ENCODE measurements at regions of chr18 and their contacts with region 1.

Region 1: DNA sequence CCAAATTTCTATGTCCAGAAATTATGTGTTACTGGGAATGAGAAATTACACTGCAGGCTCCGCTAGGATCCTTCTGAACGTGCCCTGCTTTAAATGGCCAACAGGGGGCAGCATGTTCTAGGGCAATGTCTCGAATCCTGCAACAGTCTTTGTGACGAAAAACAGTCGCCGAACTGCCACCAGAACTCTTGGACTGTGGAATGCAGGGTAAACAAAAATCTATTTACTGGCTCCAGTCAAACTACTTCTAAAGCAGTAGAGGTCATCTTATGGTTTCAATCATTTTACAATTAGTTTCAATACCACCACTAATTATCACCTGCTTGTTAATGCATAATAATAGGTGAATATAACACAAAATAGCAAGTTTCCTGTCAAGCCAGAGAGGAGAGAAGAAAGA is 9.8 kb upstream of the ZNF397 start:
- DNase-seq: peak; percentile 73 to 79
- H3K4me3 ChIP-seq: no peak overlapping the region
- H3K27ac ChIP-seq: no peak overlapping the region
- H3K4me1 ChIP-seq: no peaks in the 10 kb centered on the region
- H3K27me3 ChIP-seq: no peaks in the 10 kb centered on the region
- CTCF ChIP-seq: peak; percentile 53 to 80 (median 71)
- POLR2A ChIP-seq: no peak

Region 2: GRCh38 chr18:34242740-34243139 is 988.3 kb before region 1 on chr18:
- intact Hi-C with region 1: no loop called
- DNase-seq: no peak
- H3K4me3 ChIP-seq: no peak overlapping the region
- H3K27ac ChIP-seq: no peak overlapping the region
- H3K4me1 ChIP-seq: no peaks in the 10 kb centered on the region
- H3K27me3 ChIP-seq: no peaks in the 10 kb centered on the region
- CTCF ChIP-seq: no peak
- POLR2A ChIP-seq: no peak

Region 3: GRCh38 chr18:34801774-34802173 is 429.3 kb before region 1 on chr18:
- intact Hi-C with region 1: no loop called
- DNase-seq: no peak
- H3K4me3 ChIP-seq: no peak overlapping the region
- H3K27ac ChIP-seq: no peak overlapping the region
- H3K4me1 ChIP-seq: no peaks in the 10 kb centered on the region
- H3K27me3 ChIP-seq: no peaks in the 10 kb centered on the region
- CTCF ChIP-seq: no peak
- POLR2A ChIP-seq: no peak

Region 4: GRCh38 chr18:35343936-35344735 is 113.1 kb after region 1 on chr18 and contains the start of gene ZNF24:
- intact Hi-C with region 1: loop called (anchors 10 kb)
- DNase-seq: peak; percentile 95 to 98
- H3K4me3 ChIP-seq: peak within 1 kb of the TSS; percentile 87 to 94 (median 92)
- H3K27ac ChIP-seq: peak within 1 kb of the TSS; percentile 100
- H3K4me1 ChIP-seq: peaks cover 0 to 4% of the 10 kb centered on the region in 2 donors
- H3K27me3 ChIP-seq: no peaks in the 10 kb centered on the region
- CTCF ChIP-seq: peak in 2 of 3 donors; percentile 7 to 12
- POLR2A ChIP-seq: peak; percentile 83
- total RNA-seq, gene ZNF24: 39.0 to 79.0 (median 52.8) TPM

Region 5: GRCh38 chr18:35497370-35498197 is 266.5 kb after region 1 on chr18 and contains the start of gene INO80C:
- intact Hi-C with region 1: loop called (anchors 5 kb)
- DNase-seq: peak; percentile 85 to 88
- H3K4me3 ChIP-seq: peak within 1 kb of the TSS; percentile 66 to 81 (median 69)
- H3K27ac ChIP-seq: peak within 1 kb of the TSS; percentile 96
- H3K4me1 ChIP-seq: peaks cover 0 to 8% of the 10 kb centered on the region in 2 donors
- H3K27me3 ChIP-seq: no peaks in the 10 kb centered on the region
- CTCF ChIP-seq: no peak
- POLR2A ChIP-seq: peak; percentile 88
- total RNA-seq, gene INO80C: 5.9 to 14.7 (median 6.7) TPM

Measured in breast epithelium (tissue), 4 donors.